Activated T-helper 2 cell treated with anti-CD3 and anti-CD28 coated beads, Interferon-gamma antibody, Interleukin-2, Interleukin-4, amounts not matched to agents 10 μg/mL and 5 μg/mL and 100 μg/mL, durations not matched to agents 14 hours and 24 hours and 36 hours (primary cell): ENCODE measurements at regions of chr3 and their contacts with region 1.

Region 1: DNA sequence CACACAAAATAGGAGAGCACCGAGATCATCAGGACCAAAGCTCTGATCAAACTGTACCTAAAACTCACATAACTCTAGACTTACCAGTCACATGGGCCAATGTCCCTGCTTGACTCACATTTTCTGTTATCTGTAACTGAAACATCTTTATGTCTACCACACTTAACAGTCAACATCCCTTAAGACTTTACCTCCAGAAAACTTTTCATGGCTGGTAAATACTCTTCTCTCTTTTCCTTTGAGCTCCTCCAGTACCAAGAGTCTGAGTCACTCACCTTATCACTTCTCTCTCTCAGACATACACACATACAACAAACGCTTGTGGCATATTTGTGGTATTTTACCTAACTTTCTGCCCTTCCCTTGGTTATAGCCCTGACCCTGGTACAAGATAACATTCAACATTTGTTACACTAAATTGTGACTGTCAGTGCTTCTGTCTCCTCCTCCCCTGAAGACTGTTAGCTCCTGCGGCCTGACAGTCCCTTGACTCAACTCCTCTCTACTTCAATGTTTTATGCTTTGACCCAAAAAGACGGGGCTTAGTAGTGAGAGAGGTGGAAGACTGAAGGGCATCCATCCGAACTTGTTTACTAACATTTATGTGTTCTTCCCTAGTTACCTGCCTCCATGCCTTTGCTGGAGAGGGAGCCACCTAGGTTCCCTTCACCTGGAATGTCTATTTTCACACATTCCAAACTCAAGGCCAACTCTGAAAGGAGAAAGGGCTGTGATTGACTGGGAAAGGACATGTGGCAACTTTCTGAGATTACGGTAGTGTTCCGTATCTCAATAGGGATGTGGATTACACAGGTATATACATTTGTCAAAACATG is 3.7 kb upstream of the EFHB start:
- DNase-seq: no peak
- H3K4me3 Mint-ChIP-seq: no peak overlapping the region
- H3K27ac Mint-ChIP-seq: peak overlapping the region; percentile 84
- H3K4me1 Mint-ChIP-seq: peaks cover 39% of the 10 kb centered on the region
- H3K27me3 Mint-ChIP-seq: peaks cover 6% of the 10 kb centered on the region

Region 2: DNA sequence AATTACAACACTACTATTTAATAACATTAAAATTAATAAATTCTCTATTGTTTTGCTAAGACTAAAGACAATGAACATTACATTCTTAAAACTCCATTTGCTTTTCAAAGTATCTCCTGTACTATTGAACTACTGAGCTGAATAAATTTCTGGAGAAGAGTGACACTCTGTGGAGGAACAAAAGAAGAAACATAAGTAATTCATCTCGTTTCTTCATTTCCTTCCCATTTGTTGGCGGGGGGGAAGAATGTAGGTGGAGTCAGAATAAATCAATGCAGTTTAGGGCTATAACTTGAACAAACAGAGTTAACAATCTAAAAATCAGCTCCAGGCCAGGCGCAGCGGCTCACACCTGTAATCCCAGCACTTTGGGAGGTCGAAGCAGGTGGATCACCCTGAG is 36.3 kb before region 1 on chr3:
- intact Hi-C with region 1: no loop called
- DNase-seq: no peak
- H3K4me3 Mint-ChIP-seq: no peak overlapping the region
- H3K27ac Mint-ChIP-seq: no peak overlapping the region
- H3K4me1 Mint-ChIP-seq: no peaks in the 10 kb centered on the region
- H3K27me3 Mint-ChIP-seq: peaks cover 2% of the 10 kb centered on the region

Region 3: DNA sequence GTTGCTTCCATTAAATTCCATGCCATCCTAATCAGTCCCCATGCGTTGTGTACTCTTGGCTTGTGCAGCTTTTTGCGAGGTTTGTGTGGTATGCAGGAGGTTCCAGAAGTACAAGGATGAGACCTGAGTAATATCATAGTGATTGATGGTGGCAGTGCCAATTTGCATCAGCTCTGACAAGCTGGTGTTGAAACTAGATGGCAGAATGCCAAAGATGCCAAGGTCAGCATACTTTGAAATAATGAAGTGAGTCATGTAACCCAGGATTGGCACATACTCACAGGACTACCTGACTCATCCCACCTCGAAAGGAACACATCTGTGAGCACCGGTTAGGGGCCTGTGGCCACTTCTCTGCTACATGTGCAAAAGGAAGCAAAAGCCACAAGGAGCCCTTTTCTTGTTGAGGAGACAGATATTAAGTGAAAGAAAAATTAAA is 116.9 kb after region 1 on chr3:
- intact Hi-C with region 1: loop called (anchors 1 kb)
- DNase-seq: peak; percentile 39
- H3K4me3 Mint-ChIP-seq: no peak overlapping the region
- H3K27ac Mint-ChIP-seq: no peak overlapping the region
- H3K4me1 Mint-ChIP-seq: peaks cover 25% of the 10 kb centered on the region
- H3K27me3 Mint-ChIP-seq: no peaks in the 10 kb centered on the region

Region 4: DNA sequence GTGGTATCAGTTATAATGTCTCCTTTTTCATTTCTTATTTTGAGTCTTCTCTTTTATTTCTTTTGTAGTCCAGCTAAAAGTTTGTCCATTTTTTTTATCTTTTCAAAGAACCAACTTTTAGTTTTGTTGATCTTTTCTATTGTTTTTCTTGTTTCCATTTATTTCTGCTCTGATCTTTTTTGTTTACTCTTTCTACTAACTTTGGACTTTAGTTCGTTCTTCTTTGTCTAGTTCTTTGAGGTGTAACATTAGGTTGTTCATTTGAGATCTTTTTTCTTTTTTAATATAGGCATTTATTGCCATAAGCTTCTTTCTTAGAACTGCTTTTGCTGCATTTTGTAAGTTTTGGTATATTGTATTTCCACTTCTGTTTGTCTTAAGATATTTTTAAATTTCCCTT is 153.7 kb after region 1 on chr3:
- intact Hi-C with region 1: no loop called
- DNase-seq: no peak
- H3K4me3 Mint-ChIP-seq: no peak overlapping the region
- H3K27ac Mint-ChIP-seq: no peak overlapping the region
- H3K4me1 Mint-ChIP-seq: no peaks in the 10 kb centered on the region
- H3K27me3 Mint-ChIP-seq: no peaks in the 10 kb centered on the region